ENCODE measurements at regions of chr21 and their contacts with region 1.

Region 1: DNA sequence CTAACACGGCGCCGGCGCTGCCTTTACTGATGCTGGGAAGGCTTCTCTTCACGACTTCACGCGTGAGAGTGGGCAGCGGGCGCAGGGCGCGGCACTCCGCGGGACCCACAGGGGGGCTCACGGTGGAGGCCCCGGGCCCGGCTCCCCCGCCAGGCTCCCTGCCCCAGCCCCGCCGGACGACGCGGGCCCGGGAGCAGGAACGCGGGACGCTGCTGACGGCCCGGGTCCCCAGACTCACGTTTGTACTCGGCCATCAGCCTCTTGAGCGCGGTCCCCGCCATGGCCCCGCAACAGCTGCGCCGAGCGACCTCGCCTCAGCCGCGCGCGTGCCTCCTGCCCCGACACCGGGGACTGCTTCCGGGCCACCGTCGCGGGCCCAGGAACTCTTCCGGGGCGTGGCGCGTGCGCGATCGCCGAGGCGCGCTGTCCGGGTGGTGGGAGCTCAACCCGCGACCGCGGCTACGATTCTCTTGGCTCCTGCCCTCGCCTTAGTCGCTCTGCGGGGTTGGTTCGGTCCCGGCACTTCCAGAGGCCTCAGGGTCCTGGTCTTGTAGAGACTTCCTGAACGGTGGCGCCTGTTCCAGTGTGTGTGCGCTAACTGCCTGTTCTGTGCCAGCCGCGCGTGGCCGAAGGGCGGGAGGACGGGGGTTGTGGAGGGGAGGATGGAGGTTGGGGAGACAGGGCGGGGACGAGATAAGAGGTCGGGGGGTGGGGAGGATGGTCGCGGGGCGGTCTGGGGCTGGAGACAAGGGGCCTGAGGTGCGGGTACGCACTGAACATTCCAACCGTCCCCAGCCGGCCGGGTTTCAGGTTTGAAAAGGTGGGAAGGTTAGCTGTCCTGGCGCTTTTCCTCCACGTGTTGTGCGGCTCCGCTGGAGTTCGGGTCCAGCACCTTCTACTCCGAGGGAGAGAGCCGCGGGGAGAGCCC is at the start of gene UBE2G2:
- DNase-seq: peak; percentile 91
- H3K4me3 Mint-ChIP-seq: peak within 1 kb of the TSS; percentile 99
- H3K27ac Mint-ChIP-seq: peak within 1 kb of the TSS; percentile 89
- H3K4me1 Mint-ChIP-seq: peaks cover 54% of the 10 kb centered on the region
- H3K27me3 Mint-ChIP-seq: no peaks in the 10 kb centered on the region
- total RNA-seq, gene UBE2G2: 87.6 to 96.0 TPM

Region 2: DNA sequence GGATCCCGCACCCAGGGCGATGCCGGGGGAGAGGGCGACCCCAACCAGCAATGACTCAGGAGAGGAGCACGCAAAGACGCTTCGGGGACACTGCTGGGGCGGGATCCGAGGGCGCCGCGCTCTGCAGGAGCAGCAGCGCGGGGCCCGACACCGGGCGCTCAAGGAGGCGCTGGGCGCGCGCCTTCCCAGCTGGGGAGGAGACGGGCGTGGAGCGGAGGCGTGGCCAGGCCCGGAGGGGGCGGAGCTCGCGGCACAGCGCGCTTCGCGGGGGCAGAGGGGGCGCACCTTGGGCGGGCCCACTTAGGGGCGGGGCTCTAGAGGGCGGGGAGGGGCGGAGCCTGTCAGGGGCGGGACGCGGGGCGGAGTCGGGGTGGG is 15.8 kb after region 1 on chr21:
- CTCF ChIA-PET with region 1: interaction called, 11 read pairs
- POLR2A ChIA-PET with region 1: interaction called, 6 read pairs
- intact Hi-C with region 1: loop called (anchors 1 kb)
- DNase-seq: peak; percentile 95
- H3K4me3 Mint-ChIP-seq: peak overlapping the region; percentile 72
- H3K27ac Mint-ChIP-seq: peak overlapping the region; percentile 33
- H3K4me1 Mint-ChIP-seq: peaks cover 11% of the 10 kb centered on the region
- H3K27me3 Mint-ChIP-seq: no peaks in the 10 kb centered on the region

Region 3: GRCh38 chr21:44880762-44881585 is 79.2 kb after region 1 on chr21:
- CTCF ChIA-PET with region 1: interaction called, 100 read pairs
- POLR2A ChIA-PET with region 1: no interaction called
- intact Hi-C with region 1: no loop called
- DNase-seq: peak; percentile 31
- H3K4me3 Mint-ChIP-seq: no peak overlapping the region
- H3K27ac Mint-ChIP-seq: peak overlapping the region; percentile 79
- H3K4me1 Mint-ChIP-seq: peaks cover 21% of the 10 kb centered on the region
- H3K27me3 Mint-ChIP-seq: no peaks in the 10 kb centered on the region

Region 4: DNA sequence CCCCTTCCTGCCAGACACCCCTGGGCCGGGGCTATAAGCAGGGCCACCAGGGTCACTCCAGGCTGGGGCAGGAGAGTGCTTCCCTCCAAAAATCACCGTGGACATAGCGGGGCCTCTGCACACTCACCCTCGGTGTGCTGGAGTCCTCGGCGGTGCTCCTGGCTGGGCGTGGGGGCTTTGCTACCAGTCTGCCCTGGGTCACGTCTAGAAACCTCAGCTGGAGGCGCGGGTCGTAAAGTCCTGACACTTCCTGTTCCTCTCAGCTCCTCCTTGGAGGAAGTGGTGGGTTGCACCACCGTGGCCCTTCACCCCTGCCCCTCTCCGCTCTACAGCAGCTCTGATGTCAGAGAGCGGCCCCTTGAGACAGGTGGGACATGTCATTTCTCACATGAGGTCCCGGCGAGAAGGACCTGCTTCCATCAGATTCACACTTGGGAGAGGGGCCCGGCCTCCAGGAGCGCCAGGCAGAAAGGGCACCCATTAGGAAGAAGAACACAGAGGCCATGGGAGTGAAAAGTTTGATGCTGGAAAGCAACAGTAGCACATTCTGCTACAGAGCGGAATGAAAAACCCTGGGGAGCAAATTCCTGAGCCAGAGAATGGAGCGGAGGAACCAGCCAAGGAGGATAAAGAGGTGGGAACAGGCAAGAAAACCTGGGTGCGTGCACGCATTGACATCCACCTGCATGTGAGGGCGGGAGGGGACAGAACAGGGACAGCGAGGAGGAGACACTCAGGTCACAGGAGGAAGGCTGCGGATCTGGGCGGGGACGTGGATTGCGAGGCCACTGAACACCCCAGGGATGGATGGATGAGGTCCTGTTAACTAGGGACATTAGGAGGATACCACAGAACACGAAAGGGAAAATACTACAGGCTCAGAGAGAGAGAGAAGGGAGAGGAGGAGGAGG is 119.2 kb after region 1 on chr21 and contains the start of gene ITGB2:
- CTCF ChIA-PET with region 1: interaction called, 23 read pairs
- POLR2A ChIA-PET with region 1: interaction called, 3 read pairs
- intact Hi-C with region 1: no loop called
- DNase-seq: peak; percentile 83
- H3K4me3 Mint-ChIP-seq: peak within 1 kb of the TSS; percentile 100
- H3K27ac Mint-ChIP-seq: peak within 1 kb of the TSS; percentile 95
- H3K4me1 Mint-ChIP-seq: peaks cover 61% of the 10 kb centered on the region
- H3K27me3 Mint-ChIP-seq: no peaks in the 10 kb centered on the region
- total RNA-seq, gene ITGB2: 242 to 247 TPM

Region 5: GRCh38 chr21:45000977-45001728 is 199.4 kb after region 1 on chr21:
- CTCF ChIA-PET with region 1: no interaction called
- POLR2A ChIA-PET with region 1: no interaction called
- intact Hi-C with region 1: no loop called
- DNase-seq: no peak
- H3K4me3 Mint-ChIP-seq: no peak overlapping the region
- H3K27ac Mint-ChIP-seq: no peak overlapping the region
- H3K4me1 Mint-ChIP-seq: peaks cover 6% of the 10 kb centered on the region
- H3K27me3 Mint-ChIP-seq: peaks cover 2% of the 10 kb centered on the region

Measured in activated CD4-positive, alpha-beta memory T cell treated with anti-CD3 and anti-CD28 coated beads for 36 hours (primary cell).